Activated T-helper 1 cell treated with anti-CD3 and anti-CD28 coated beads, Interleukin-12 subunit alpha, Interleukin-12 subunit beta, Interleukin-2, Interleukin-4 antibody, amounts not matched to agents 30 ng/mL and 10 ng/mL and 1 ng/mL, durations not matched to agents 14 hours and 24 hours and 36 hours (primary cell): ENCODE measurements at regions of chr2 and their contacts with region 1.

Region 1: DNA sequence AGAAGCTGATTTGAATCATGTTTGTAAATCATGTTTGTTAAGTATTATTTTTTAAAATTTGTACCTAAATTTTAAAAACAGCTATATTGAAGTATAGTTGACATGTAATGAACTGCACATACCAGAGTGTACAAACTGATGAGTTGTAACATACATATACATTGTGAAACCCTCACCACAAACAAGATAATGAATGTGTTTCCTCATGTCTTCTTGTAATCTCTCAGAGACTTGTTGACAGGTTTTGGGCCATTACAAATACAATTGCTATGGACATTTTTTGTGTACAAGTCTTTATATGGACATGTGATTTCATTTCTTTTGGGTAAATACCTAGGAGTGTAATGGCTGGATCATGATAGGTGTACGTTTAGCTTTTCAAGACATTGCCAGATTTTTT is 21.5 kb downstream of the WDR43 start:
- DNase-seq: no peak
- H3K4me3 Mint-ChIP-seq: no peak overlapping the region
- H3K27ac Mint-ChIP-seq: peak overlapping the region; percentile 44
- H3K4me1 Mint-ChIP-seq: peaks cover 9% of the 10 kb centered on the region
- H3K27me3 Mint-ChIP-seq: no peaks in the 10 kb centered on the region

Region 2: DNA sequence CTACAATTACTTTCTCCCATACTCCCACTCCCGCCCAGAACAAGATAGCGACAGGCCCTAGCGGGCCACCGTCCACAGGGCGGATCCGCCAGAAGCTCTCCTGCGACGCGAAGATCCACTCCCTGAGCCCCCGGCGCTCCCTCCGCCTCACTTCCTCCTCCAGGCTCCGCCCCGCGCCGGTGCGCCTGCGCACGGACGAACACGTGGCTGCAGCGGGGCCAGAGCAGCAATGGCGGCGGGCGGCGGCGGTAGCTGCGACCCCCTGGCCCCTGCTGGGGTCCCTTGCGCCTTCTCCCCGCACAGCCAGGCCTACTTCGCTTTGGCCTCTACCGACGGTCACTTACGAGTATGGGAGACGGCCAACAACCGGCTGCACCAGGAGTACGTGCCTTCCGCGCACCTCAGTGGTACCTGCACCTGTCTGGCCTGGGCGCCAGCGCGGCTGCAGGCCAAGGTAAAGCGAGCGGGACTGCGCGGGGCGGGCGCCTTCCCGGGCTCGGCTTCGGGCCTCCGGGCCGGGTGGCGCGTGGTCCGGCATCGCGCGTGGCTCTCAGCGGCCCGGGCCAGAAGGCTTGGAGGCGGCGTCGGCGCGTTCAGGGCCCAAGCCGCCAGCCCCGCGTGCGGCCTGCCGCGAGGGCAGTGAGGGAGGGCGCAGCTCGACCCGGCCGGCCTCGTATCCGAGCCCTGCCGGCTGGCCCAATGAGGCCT is 21.3 kb before region 1 on chr2 and contains the start of gene WDR43:
- intact Hi-C with region 1: loop called (anchors 2 kb)
- DNase-seq: peak; percentile 99
- H3K4me3 Mint-ChIP-seq: peak within 1 kb of the TSS; percentile 100
- H3K27ac Mint-ChIP-seq: peak within 1 kb of the TSS; percentile 96
- H3K4me1 Mint-ChIP-seq: peaks cover 40% of the 10 kb centered on the region
- H3K27me3 Mint-ChIP-seq: no peaks in the 10 kb centered on the region
- total RNA-seq, gene WDR43: 188 and 190 TPM in 2 replicates

Region 3: GRCh38 chr2:28927878-28928277 is 11.9 kb after region 1 on chr2:
- intact Hi-C with region 1: loop called (anchors 2 kb)
- DNase-seq: no peak
- H3K4me3 Mint-ChIP-seq: no peak overlapping the region
- H3K27ac Mint-ChIP-seq: no peak overlapping the region
- H3K4me1 Mint-ChIP-seq: peaks cover 17% of the 10 kb centered on the region
- H3K27me3 Mint-ChIP-seq: no peaks in the 10 kb centered on the region